ENCODE measurements at regions of chr14 and their contacts with region 1.

Region 1: DNA sequence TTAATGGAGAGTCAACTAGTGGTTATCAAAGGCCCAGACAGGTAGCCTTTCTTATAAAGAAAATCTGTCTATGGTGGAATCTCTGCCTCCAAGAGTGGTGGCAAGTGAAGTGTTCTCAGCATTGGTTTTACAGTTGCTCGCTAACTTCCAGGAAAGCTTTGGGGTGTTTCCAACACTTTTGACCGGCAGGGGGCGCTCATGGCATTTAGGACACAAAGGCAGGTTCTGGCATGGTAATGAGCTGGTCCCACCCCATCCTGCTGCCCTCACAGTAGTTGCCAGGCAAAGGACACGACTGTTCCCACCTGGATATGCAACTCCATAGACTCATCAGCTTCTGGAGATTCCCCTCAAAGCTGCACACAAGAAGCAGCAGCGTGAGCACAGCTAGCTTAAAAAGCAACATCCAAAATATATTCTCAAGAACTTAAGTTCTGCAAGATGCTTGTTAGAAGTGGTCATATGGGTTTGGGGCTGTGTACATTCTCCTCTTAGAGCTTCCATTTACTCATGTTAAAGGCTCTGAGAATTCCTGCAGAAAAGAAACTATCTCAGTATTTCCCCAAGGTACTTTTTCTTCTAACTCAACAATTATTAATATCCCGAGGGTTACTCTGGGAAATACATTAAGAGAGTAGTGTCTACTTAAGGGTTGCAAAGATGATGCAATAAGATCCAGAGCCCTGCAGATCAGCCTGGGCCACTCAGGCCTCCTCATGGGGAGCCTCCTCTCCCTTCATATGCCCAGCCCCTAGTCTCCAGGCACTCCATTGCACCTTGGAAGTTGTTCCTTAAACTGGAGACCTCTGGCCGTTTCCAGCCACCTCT is 14.8 kb downstream of the PROX2 start:
- DNase-seq: peak; percentile 80 to 96 (median 88)
- H3K4me3 ChIP-seq: no peak overlapping the region
- H3K27ac ChIP-seq: no peak overlapping the region
- H3K27me3 ChIP-seq: no peaks in the 10 kb centered on the region
- CTCF ChIP-seq: peak; percentile 66 to 95 (median 88)

Region 2: GRCh38 chr14:74888164-74889158 is 27.3 kb after region 1 on chr14:
- intact Hi-C with region 1: loop called in 1 of 2 experiments (anchors 1 kb)
- DNase-seq: no peak
- H3K4me3 ChIP-seq: no peak overlapping the region
- H3K27ac ChIP-seq: no peak overlapping the region
- H3K27me3 ChIP-seq: no peaks in the 10 kb centered on the region
- CTCF ChIP-seq: no peak

Region 3: DNA sequence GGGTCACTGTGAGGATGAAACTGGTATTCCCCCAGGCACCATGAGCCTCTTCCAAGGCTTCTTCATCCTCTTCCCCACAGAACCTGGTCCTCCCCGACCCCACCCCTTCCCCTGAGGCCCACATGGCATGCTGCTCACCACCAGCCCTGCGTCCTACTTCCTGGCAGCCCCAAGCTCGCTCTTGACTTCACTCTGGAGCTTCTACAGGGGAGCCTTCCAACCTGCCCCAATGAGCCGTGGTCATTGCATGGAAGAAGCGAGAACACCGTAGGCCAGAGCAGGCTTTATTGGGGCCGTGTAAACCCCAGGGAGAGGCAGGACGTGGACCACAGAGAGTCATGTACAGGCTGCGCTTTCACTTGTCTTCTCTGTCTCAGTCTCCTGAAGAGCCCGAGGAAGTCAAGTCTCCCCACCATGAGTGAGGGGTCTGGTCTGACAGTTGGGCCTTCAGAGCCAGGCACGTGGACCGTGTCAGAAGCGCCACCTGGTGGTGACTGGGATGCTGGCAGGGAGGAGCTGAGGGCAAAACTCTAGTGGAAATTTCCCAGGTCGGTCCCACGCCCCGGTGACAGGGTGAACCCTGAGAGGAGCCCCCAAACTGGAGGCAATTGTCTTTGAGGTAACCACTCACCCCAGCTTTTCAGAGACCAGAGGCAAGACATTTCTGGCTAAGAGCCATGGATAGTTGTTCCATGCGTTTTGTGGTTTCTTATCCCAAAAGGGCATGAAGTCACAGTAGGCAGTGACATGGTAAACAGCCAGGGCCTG is 44.4 kb after region 1 on chr14:
- intact Hi-C with region 1: loop called (anchors 1 kb)
- DNase-seq: peak in 9 of 10 donors; percentile 65 to 81 (median 71)
- H3K4me3 ChIP-seq: no peak overlapping the region
- H3K27ac ChIP-seq: peak overlapping the region in 8 of 59 donors; percentile 5 to 59 (median 22)
- H3K27me3 ChIP-seq: no peaks in the 10 kb centered on the region
- CTCF ChIP-seq: peak; percentile 79 to 98 (median 93)

Measured in dorsolateral prefrontal cortex (tissue), 120 donors.